Posterior vena cava (tissue), 2 donors: ENCODE measurements at regions of chr1 and their contacts with region 1.

Region 1: GRCh38 chr1:22704440-22705067 is 6.1 kb upstream of the EPHB2 start:
- DNase-seq: peak; percentile 93

Region 2: DNA sequence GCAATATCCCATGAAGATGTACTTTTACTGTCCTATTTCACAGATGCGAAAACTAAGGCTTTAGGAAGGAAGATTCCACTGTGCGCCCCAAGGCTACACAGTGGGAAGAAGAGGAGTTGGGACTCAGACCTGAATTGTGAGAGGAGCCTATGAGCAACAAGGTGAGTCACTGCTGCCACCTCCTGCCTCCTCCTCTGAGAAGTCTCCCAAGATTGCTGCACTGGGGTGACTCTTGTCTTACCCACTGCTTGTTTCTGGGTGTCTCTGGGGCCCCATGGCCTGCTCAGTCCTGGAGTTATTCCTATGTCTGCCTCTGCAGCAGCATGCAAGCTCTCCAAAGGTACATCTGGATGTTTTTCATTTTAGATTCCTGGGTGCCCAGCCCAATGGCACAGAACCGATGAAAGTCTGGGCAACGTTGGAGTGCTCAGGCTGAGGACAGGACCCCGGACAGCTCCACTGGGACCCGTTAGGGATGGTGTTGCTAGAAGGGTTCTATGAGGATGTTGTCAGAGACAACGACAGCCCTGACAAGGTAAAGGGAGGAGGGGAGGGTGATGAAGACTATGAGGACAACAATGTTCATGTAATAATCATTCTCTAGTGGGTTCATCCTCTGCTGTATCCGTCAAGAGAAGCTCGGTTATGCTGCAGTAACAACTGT is 79.2 kb before region 1 on chr1:
- intact Hi-C with region 1: no loop called
- DNase-seq: no peak

Region 3: DNA sequence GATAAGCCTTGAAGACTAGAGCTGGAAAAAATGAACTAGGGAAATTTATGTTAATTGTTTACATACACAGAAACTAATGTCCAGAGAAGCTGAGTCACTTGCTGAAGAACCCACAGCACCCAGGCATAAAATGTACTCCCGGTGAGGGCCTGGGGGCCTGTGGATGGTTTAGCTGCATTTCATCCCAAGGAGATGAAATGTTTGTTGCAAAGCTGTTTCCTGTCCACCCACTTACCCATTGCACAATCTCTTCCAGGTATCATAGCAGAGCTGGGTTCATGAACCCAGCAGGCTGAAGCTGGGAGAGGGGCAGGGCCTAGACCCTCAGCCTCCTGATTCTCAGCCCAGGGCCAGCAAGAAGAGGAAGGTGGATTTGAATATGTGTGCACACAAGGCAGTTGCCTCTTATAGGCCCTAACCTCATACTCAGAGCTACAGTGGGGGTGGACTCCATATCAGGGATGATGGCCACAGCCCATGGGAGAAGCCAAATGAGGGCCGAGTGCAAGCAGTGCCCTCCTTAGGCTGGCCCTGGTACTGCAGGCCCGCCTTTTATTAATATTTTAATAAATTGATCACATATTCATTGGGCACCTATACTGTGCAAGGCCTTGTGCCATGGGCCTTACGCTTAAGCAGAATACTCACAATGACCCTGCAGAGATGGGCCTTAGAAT is 157.3 kb after region 1 on chr1:
- intact Hi-C with region 1: loop called in 1 of 2 experiments (anchors 5 kb)
- DNase-seq: no peak

Region 4: DNA sequence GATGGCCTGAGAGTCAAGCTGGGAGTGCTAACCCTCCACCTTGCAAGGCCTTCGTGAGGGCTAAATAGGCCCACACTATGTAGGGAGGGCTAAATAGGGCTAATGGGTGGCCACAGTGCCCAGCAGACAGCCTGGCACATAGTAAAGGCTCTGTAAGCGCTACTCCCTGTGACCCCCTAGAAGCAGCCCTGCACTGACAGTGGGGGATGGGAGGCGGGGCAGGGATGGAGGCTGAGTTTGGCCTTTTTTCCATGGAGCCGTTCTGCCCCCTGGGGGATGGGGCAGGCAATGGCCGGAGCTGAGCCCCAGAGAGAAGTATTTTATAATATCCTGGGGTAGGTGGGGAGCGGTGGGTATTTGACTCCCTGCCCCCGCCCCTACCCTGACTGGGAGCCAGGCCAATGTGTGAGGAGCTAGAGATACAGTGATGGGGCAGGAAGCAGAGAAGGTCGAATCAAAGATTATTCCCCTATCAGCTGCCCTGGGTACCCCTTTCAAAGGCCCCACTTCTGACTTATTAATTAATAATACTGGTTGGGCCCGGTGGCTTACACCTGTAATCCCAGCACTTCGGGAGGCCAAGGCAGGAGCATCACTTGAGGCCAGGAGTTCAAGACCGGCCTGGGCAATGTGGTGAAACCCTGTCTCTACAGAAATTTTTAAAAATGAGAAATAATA is 225.8 kb after region 1 on chr1:
- intact Hi-C with region 1: loop called in 1 of 2 experiments (anchors 10 kb)
- DNase-seq: peak; percentile 79